A673 (cell line): ENCODE measurements at regions of chr12 and their contacts with region 1.

Region 1: DNA sequence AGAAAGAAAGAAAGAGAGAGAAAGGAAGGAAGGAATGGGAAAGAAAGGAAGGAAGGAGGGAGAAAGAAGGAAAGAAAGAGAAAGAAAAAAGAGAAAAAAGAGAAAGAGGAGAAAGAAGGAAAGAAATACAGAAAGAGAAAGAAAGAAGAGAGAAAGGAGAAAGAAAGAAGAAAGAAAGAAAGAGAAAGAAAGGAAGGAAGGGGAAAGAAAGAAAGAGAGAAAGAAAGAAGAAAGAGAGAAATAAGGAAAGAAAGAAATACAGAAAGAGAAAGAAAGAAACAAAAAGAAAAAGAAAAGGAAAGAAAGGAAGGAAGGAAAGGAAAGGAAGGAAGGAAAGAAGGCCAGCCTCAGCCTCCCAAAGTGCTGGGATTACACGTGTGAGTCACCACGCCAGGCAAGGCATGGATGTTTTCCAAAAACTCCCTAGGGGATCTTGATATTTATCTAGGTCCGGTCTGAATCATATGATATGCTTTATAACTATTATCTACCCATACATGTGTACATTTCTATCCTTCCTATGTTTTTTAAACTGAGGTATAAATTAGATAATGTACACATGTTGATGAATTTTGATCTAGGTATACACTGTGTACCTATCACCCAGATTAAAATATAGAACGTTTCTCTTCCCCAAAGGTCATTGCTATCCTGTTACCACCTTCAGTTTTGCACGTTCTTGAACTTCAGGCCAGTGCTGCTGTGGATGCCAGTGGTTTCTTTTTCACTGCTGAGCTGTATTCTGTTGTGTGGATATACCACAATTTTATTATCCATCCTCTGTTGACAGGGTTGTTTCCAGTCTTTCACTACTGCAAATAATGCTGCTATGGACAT is 177.9 kb downstream of the RBM19 start:
- DNase-seq: peak; percentile 49
- H3K4me3 ChIP-seq: no peak overlapping the region
- H3K27ac ChIP-seq: no peak overlapping the region
- H3K4me1 ChIP-seq: no peaks in the 10 kb centered on the region
- H3K27me3 ChIP-seq: peaks cover 7% of the 10 kb centered on the region
- CTCF ChIP-seq: no peak

Region 2: GRCh38 chr12:113727651-113728061 is 60.6 kb before region 1 on chr12:
- CTCF ChIA-PET with region 1: no interaction called
- POLR2A ChIA-PET with region 1: no interaction called
- intact Hi-C with region 1: no loop called
- DNase-seq: no peak
- H3K4me3 ChIP-seq: no peak overlapping the region
- H3K27ac ChIP-seq: no peak overlapping the region
- H3K4me1 ChIP-seq: no peaks in the 10 kb centered on the region
- H3K27me3 ChIP-seq: peaks cover 38% of the 10 kb centered on the region
- CTCF ChIP-seq: no peak

Region 3: DNA sequence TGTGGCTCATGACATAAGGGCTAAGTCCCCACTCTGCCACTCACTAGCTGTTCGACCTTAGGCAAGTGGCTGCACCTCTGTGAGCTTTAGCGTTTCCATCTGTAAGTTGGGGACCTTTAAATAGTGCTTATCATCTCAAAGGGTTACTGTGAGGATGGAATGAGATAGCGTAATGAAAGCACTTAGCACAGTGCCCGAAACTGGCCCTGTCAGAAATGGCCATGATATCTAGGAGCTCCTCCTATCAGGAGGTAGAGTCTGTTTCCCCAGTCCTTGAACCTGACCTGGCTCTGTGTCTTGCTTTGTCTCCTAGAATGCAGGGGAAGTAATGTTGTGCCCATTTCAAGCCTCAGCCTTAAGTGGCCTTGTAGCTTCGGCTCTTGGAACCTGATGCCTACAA is 33.1 kb before region 1 on chr12:
- CTCF ChIA-PET with region 1: no interaction called
- POLR2A ChIA-PET with region 1: no interaction called
- intact Hi-C with region 1: no loop called
- DNase-seq: no peak
- H3K4me3 ChIP-seq: no peak overlapping the region
- H3K27ac ChIP-seq: no peak overlapping the region
- H3K4me1 ChIP-seq: no peaks in the 10 kb centered on the region
- H3K27me3 ChIP-seq: peaks cover 18% of the 10 kb centered on the region
- CTCF ChIP-seq: no peak

Region 4: DNA sequence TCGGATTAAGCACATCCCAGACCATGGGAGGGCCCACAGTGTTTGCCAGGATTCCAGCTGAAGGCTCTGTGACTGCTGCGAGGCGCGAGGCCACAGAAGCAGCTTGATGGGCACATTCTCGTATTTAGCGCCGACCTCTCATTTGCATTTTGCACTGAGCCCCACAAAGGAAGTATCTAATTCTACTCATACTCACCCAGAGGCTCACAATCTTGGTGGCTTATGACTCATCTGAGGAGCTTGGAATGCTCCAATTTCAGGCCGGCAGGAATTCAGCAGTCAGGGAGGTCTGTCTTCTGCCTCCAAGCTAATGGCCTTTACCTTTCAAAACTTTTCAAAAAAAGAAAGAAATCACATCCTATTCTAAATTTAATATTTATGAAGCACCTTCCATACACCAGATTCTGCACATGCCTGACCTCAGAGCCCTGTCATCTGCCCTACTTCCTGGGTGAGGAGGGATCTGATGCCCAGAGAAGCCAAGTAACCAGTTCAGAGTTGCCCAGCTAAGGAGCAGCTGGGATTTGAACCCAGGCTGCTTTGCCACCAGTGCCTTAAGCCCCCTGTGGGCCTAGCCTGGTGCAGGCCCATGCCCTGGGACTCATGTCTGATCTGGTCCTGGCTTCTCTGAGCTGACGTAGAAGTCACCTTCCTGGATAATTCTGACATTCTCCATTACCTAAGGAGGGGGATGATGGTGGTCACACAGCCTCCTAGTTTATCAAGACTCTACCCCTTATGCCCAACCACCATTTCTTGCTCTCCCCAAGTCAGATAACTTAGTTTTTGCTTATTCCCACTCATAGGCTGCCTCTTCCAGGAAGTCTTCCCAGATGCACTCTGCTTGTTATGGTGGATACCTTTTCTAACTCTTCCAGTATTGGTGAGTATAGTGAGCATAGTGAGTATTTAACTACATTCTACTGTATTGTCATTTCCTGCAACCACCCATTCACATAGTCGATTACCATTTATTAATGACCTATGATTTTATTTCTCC is 21.1 kb before region 1 on chr12:
- CTCF ChIA-PET with region 1: interaction called, 12 read pairs
- POLR2A ChIA-PET with region 1: no interaction called
- intact Hi-C with region 1: no loop called
- DNase-seq: peak; percentile 86
- H3K4me3 ChIP-seq: no peak overlapping the region
- H3K27ac ChIP-seq: no peak overlapping the region
- H3K4me1 ChIP-seq: peaks cover 7% of the 10 kb centered on the region
- H3K27me3 ChIP-seq: peaks cover under 1% of the 10 kb centered on the region
- CTCF ChIP-seq: no peak